Activated CD4-positive, alpha-beta memory T cell treated with anti-CD3 and anti-CD28 coated beads for 36 hours (primary cell): ENCODE measurements at regions of chr1 and their contacts with region 1.

Region 1: DNA sequence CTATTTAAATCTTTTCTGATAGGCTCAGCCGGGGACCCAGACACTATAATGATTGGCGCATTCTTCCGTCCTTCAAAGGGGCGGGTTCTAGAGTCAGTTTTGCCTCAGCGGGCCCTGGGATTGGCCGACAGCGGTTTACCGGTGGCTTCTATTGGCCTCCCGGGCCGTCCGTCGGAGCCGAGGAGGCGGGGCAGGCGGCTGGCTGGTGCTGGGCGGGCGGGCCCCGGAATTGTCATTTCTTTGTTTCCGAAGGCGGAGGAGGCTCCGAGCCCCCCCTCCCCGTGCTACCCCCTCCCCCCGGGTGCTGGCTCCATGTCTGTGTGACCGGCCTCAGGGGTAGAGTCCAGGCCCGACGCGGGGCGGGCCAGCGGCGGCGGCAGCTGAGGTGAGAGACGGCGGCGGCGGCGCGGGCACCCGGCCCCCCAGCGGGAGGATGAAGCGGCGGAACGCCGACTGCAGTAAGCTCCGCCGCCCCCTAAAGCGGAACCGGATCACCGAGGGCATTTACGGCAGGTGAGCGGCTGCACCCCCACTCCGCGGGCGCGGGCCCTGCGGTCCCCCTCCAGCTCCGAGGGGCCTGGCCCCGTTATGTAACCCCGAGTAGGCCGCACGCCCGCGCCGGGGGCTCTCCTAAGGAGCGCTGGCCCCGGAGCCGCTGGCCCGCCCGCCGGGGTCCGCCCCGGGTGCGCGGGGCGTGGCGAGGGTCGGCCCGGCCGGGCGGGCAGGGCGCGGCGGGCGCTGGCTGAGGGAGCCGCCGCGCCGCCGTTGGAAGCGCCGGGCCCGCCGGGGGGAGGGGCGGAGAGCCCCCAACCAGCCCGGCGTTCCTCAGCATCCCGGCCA is at the start of gene MACO1:
- DNase-seq: peak; percentile 98
- H3K4me3 Mint-ChIP-seq: peak within 1 kb of the TSS; percentile 98
- H3K27ac Mint-ChIP-seq: peak within 1 kb of the TSS; percentile 98
- H3K4me1 Mint-ChIP-seq: peaks cover 44% of the 10 kb centered on the region
- H3K27me3 Mint-ChIP-seq: no peaks in the 10 kb centered on the region
- total RNA-seq, gene MACO1: 11.0 to 11.4 TPM

Region 2: DNA sequence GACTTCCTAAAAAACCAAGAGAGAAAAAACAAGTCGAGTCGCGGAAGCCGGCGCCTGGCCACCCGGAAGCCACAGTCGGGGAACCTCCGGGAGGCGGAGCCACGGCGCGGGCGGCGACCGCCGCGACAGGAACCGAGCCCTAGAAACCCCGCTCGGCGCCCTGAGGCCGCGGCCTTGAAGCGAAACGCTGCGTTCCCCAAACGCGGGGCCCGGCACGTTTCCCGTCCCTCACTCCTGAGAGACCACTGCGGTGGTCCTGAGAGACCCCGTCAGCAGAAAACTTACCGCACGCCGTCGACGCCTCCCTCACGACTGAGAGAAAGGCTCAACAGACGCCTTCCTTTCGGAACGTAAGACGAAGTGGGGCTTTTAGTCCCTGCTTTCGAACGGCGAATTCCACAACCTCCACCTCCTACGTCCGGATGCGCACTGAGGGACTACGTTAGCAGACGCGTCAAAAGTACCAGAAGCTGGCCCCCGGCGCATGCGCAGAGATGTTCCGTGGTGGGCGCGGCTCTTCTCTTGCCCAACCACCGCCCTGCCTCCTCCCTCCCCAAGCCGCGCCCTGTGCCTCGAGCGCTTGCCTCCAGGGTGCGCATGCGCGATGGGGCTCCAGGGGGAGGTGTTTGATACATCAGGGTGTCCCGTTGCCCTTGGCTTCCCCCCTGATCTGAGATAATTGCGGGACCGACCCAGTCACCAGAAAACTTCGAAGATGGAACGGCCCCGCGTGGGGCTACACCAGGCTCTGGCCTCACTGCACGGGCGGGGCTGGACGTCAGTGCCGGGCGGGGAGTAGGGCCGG is 183.7 kb before region 1 on chr1 and contains the start of gene RSRP1:
- CTCF ChIA-PET with region 1: no interaction called
- POLR2A ChIA-PET with region 1: interaction called, 5 read pairs
- intact Hi-C with region 1: loop called (anchors 2 kb)
- DNase-seq: peak; percentile 100
- H3K4me3 Mint-ChIP-seq: peak within 1 kb of the TSS; percentile 95
- H3K27ac Mint-ChIP-seq: peak within 1 kb of the TSS; percentile 99
- H3K4me1 Mint-ChIP-seq: peaks cover 41% of the 10 kb centered on the region
- H3K27me3 Mint-ChIP-seq: peaks cover 3% of the 10 kb centered on the region
- total RNA-seq, gene RSRP1: 123 to 143 TPM

Region 3: GRCh38 chr1:25338188-25338981 is 92.5 kb before region 1 on chr1 and contains the start of gene TMEM50A:
- CTCF ChIA-PET with region 1: no interaction called
- POLR2A ChIA-PET with region 1: no interaction called
- intact Hi-C with region 1: loop called (anchors 5 kb)
- DNase-seq: peak; percentile 93
- H3K4me3 Mint-ChIP-seq: peak within 1 kb of the TSS; percentile 88
- H3K27ac Mint-ChIP-seq: peak within 1 kb of the TSS; percentile 87
- H3K4me1 Mint-ChIP-seq: peaks cover 29% of the 10 kb centered on the region
- H3K27me3 Mint-ChIP-seq: no peaks in the 10 kb centered on the region
- total RNA-seq, gene TMEM50A: 124 to 128 TPM

Region 4: DNA sequence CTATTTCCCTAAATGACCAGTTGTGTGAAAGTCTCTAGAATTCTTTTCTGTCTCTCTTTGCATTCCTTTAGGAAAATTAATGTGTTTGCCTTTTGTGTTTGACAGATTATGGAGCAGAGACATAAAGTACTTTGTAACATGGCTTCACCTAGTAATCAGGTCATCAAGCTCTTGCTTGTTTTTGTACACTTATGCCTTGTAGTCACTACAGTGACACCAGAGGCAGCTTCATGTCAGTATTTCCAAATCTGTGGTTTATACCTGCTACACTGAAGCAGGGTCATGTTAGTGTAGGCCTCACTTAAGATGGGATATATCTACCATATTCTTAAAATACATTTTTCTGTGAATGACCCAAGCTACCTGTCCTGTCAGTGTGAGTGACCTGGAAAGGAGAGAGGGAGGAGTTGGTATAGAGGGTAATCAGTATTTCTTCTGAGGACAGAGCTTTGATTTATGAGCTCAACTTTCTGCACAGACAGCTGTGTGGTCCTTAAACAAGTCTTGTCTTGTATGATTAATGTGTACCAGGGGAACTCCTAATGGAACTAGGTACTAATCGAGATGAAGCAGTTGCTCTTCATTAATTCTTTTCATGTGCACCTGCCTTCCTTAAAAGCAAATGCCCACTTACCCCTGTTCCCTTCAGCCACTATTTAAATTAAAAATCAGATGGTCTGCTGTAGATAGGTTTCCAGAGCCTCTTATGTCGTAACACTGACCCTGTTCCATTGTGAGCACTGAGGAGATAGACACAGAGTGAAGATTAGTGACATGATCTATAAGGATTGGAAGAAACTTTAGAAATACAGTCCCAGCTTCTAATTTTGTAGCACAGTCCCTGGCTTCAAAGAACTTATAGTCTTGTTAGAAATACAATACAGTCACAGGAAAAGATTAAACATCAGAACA is 45.6 kb after region 1 on chr1:
- CTCF ChIA-PET with region 1: no interaction called
- POLR2A ChIA-PET with region 1: interaction called, 3 read pairs
- intact Hi-C with region 1: loop called (anchors 2 kb)
- DNase-seq: no peak
- H3K4me3 Mint-ChIP-seq: no peak overlapping the region
- H3K27ac Mint-ChIP-seq: peak overlapping the region; percentile 18
- H3K4me1 Mint-ChIP-seq: peaks cover 42% of the 10 kb centered on the region
- H3K27me3 Mint-ChIP-seq: no peaks in the 10 kb centered on the region